ENCODE measurements at regions of chr1 and their contacts with region 1.

Region 1: DNA sequence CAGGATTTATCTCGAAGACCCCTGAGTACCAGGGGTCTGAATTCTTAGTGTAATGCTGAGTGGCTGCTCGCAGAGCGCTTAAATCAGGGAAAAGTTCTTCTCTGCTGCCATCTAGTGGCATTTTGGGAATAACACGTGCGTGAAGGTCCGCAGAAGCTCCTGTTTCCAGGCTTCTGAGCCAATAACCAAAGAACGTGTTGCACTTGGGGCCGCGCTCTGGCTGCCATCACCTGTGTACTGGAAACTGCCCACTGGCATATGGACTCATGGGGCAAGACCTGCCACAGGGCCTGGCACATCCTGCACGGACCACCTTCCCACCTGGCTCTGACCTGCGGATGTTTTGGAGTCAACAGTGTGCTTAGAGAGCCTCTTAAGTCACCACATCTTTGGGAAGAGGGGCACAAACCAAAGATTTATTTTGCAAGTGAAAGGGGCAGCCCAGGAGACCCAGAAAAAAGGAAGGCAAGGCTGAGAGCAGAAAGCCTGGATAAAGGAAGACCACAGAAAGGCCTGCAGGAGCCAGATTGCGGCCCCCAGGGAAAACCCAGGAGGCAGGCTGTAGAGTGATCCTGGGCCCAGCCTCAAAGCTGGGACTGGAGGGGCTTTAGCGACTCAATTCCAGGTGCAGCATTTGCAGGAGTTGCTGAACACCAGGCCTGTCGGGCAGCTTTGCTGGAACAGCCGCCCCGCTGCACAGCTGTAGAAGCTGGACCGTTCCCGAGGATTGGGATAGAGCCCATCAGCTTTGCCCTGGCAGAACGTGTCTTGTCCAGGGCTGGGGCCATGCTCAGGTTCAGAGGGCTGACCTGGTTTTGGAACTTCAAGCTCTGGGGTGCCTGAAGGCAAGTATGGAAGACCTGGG is 13.0 kb downstream of the CHIT1 start:
- H3K4me3 ChIP-seq: no peak overlapping the region
- H3K27ac ChIP-seq: no peak overlapping the region
- H3K4me1 ChIP-seq: no peaks in the 10 kb centered on the region
- CTCF ChIP-seq: peak; percentile 65

Region 2: GRCh38 chr1:203084588-203085502 is 131.7 kb before region 1 on chr1:
- CTCF ChIA-PET with region 1: interaction called, 14 read pairs
- POLR2A ChIA-PET with region 1: no interaction called
- H3K4me3 ChIP-seq: no peak overlapping the region
- H3K27ac ChIP-seq: no peak overlapping the region
- H3K4me1 ChIP-seq: no peaks in the 10 kb centered on the region
- CTCF ChIP-seq: no peak; the same call in 1 of the 2 replicates

Region 3: GRCh38 chr1:203127666-203128430 is 88.7 kb before region 1 on chr1 and contains the start of gene ADORA1:
- CTCF ChIA-PET with region 1: interaction called, 226 read pairs
- POLR2A ChIA-PET with region 1: no interaction called
- H3K4me3 ChIP-seq: peak within 1 kb of the TSS; percentile 43
- H3K27ac ChIP-seq: peak within 1 kb of the TSS; percentile 42; the same call in 1 of the 2 replicates
- H3K4me1 ChIP-seq: no peaks in the 10 kb centered on the region
- CTCF ChIP-seq: no peak; the same call in none of the 2 replicates

Region 4: DNA sequence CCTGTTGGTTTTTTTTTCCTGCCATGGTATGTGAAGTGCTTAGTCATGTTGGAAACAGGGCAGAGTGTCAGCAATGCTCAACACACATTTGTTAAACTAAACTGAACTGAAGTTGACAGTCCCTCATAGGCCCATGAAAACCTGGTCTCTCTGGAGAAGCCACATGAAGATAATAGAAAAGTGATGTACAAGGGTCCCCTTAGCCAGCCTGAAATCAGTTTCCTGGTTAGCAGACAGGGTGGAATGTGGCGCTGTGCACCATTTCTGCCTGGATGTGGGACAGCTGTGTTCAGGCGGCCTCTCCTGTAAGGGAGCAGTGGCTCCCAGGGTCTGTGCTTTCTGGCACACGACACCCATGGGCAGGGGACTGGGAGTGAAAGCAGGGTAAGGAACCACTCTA is 20.1 kb before region 1 on chr1:
- CTCF ChIA-PET with region 1: interaction called, 11 read pairs
- POLR2A ChIA-PET with region 1: no interaction called
- H3K4me3 ChIP-seq: no peak overlapping the region
- H3K27ac ChIP-seq: no peak overlapping the region
- H3K4me1 ChIP-seq: no peaks in the 10 kb centered on the region
- CTCF ChIP-seq: no peak

Region 5: DNA sequence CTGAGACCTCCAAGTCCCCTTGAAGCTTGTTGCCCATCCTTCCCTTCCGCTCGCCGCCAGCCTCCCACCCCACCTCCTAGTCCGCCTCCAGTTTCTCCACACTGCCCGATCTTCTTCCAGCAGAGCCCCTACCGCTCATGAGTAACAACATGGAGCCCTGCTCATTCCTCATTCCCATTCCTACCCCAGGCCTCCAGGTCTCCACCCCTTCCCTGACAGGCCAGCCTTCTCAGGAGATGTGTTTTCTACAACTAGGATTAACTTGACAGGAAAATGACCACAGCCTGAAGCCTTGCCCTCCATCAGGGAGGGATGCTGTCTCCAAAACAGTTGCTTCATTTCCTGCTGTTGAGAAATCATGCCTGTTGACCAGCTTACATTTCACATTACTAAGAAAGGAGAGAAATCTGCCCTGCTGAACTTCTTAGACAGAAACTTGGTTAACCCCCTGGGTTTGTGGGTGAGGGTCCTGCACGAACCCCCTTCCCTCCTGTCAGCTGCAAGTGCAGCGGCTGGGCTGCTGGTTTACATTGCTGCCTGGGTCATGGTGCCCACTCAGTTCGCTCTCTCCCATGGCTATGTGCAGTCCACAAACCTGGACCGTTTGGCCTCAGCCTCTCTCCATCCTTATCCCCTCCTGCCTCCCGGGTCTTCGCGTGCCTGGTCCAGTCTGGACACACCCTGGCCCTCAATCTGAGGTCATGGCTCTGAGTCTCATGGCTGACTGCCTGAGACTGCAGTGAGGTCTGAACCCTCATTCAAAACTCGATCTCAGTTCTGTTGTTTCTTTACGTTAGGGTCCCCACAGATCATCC is 13.9 kb before region 1 on chr1:
- CTCF ChIA-PET with region 1: interaction called, 10 read pairs
- POLR2A ChIA-PET with region 1: no interaction called
- H3K4me3 ChIP-seq: no peak overlapping the region
- H3K27ac ChIP-seq: no peak overlapping the region
- H3K4me1 ChIP-seq: no peaks in the 10 kb centered on the region
- CTCF ChIP-seq: no peak

Region 6: DNA sequence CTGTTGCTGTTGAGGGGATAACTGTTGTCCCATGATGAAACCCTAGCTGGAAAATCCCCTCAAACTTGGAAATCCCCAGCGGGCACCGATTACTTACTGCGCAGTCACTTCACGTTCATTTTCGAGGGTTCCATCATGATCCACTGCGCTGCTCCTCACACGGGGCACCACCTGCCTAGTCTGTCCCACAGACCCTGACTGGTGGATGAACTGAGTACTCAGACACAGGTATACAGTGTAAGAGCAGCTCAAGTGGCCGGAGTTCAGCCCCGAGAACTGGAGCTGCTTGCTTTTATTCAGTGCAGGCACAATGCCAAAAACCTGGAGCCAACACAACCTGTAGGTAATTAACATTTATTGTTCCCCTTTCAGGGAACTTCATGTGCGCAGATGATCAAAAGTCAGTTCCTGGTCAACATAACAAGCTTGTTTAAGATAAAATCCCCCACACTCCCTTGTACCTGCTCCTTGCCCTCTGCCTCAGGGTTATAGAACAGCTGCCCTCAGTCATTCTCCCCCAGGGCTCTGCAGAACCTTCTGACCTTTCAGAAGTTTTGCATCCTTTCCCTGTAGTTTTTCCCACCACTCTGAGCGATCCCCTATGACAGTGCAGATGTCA is 212.6 kb after region 1 on chr1:
- CTCF ChIA-PET with region 1: no interaction called
- POLR2A ChIA-PET with region 1: no interaction called
- H3K4me3 ChIP-seq: no peak overlapping the region
- H3K27ac ChIP-seq: no peak overlapping the region
- H3K4me1 ChIP-seq: no peaks in the 10 kb centered on the region
- CTCF ChIP-seq: no peak